A673 (cell line): ENCODE measurements at regions of chr12 and their contacts with region 1.

Region 1: GRCh38 chr12:53065975-53066931 is 12.9 kb downstream of the SPRYD3 start:
- DNase-seq: peak; percentile 79
- H3K4me3 ChIP-seq: no peak overlapping the region
- H3K27ac ChIP-seq: no peak overlapping the region
- H3K4me1 ChIP-seq: peaks cover 1% of the 10 kb centered on the region
- H3K27me3 ChIP-seq: no peaks in the 10 kb centered on the region
- CTCF ChIP-seq: peak; percentile 86

Region 2: DNA sequence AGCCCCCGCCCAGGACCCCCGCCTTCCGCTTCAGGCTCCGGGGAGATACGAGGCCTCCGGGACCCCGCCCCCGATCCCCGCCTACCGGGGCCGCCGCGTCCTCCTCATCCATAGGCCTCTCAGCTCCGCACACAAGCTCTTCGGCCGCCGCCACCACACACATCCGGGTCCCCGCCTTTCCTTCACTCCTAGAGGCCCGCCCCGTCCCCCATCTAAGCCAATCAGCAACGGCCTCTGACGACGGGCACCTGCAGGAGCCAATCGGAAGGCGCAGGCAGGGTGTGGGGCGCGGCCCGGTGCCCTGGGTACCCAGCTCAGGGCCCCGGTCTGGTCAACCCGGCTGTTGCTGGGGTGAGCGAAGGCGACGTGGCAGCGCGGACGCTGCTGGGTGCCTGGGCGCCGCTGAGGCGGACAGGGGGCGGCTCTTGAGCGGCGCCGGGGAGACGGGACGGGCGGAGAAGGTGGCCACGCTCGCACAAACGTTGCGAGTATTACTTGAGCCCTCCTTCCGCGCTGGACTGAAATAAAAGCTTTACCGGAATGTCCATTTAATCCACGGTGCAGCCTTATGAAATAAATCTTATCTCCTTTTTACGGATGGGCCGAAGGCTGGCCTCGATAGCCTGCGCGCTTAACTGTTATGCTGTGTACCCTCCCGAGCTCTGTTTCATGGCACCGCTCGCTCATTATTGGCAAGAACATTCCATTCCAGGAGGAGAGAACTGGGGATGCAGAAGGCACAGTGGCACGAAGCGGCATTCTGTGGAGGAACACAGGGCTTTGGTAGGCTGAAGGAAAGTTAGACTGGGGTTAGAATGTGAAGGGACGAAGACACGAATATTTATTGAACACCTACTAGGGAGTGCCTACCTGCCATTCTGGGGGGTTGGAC is 13.2 kb after region 1 on chr12 and contains the start of gene SPRYD3:
- CTCF ChIA-PET with region 1: interaction called, 18 read pairs
- POLR2A ChIA-PET with region 1: no interaction called
- intact Hi-C with region 1: no loop called
- DNase-seq: peak; percentile 97
- H3K4me3 ChIP-seq: peak within 1 kb of the TSS; percentile 65
- H3K27ac ChIP-seq: peak within 1 kb of the TSS; percentile 62
- H3K4me1 ChIP-seq: peaks cover 4% of the 10 kb centered on the region
- H3K27me3 ChIP-seq: no peaks in the 10 kb centered on the region
- CTCF ChIP-seq: no peak
- total RNA-seq, gene SPRYD3: 17.0 and 19.3 TPM in 2 replicates

Region 3: GRCh38 chr12:53098982-53099651 is 32.9 kb after region 1 on chr12:
- CTCF ChIA-PET with region 1: interaction called, 62 read pairs
- POLR2A ChIA-PET with region 1: interaction called, 3 read pairs
- intact Hi-C with region 1: loop called (anchors 1 kb)
- DNase-seq: peak; percentile 93
- H3K4me3 ChIP-seq: peak overlapping the region; percentile 61
- H3K27ac ChIP-seq: peak overlapping the region; percentile 6
- H3K4me1 ChIP-seq: peaks cover 23% of the 10 kb centered on the region
- H3K27me3 ChIP-seq: no peaks in the 10 kb centered on the region
- CTCF ChIP-seq: peak; percentile 93

Region 4: DNA sequence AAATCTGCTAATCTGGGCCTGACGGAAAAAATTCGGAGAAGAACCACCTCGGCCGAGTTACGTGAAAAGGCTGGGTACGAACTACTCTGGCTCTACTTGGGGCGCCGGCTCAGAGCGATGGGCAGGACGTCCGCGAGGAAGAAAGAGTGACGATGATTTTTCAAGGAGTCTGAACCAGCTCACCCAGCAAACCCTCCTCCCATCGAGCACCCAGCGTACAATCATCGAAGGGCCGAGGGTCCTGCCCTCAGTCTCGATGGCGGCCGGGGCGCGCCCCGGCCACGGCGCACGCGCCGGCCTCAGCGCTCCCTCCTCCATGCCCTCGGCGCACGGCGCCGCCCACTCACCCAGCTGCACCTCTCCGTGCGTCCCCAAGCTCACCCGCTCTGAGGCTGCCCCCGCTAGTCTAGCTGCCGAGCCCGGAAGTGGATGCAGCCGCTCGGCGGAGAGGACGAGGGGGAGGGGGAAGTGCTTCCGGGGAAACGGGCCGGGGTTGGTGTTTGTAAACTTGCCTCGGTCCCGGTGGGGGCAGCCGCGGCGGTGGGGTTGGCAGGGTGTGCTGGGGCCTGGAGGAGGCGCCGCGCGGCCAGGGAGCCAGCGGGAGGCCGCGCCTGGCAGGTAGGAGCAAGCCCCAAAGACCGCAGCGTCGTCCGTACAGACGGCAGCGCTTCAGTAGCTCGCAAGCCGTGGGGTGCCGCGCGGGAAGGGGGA is 114.1 kb after region 1 on chr12 and contains the starts of genes CSAD and ZNF740:
- CTCF ChIA-PET with region 1: interaction called, 3 read pairs
- POLR2A ChIA-PET with region 1: no interaction called
- intact Hi-C with region 1: loop called (anchors 5 kb)
- DNase-seq: peak; percentile 99
- H3K4me3 ChIP-seq: peak within 1 kb of the TSS; percentile 68
- H3K27ac ChIP-seq: peak within 1 kb of the TSS; percentile 93
- H3K4me1 ChIP-seq: peaks cover 29% of the 10 kb centered on the region
- H3K27me3 ChIP-seq: no peaks in the 10 kb centered on the region
- CTCF ChIP-seq: no peak
- total RNA-seq, gene CSAD: 32.3 and 37.5 TPM in 2 replicates
- total RNA-seq, gene ZNF740: 48.6 and 50.3 TPM in 2 replicates

Region 5: GRCh38 chr12:53190108-53190729 is 124.0 kb after region 1 on chr12:
- CTCF ChIA-PET with region 1: interaction called, 14 read pairs
- POLR2A ChIA-PET with region 1: no interaction called
- intact Hi-C with region 1: no loop called
- DNase-seq: peak; percentile 74
- H3K4me3 ChIP-seq: no peak overlapping the region
- H3K27ac ChIP-seq: no peak overlapping the region
- H3K4me1 ChIP-seq: no peaks in the 10 kb centered on the region
- H3K27me3 ChIP-seq: no peaks in the 10 kb centered on the region
- CTCF ChIP-seq: peak; percentile 76

Region 6: DNA sequence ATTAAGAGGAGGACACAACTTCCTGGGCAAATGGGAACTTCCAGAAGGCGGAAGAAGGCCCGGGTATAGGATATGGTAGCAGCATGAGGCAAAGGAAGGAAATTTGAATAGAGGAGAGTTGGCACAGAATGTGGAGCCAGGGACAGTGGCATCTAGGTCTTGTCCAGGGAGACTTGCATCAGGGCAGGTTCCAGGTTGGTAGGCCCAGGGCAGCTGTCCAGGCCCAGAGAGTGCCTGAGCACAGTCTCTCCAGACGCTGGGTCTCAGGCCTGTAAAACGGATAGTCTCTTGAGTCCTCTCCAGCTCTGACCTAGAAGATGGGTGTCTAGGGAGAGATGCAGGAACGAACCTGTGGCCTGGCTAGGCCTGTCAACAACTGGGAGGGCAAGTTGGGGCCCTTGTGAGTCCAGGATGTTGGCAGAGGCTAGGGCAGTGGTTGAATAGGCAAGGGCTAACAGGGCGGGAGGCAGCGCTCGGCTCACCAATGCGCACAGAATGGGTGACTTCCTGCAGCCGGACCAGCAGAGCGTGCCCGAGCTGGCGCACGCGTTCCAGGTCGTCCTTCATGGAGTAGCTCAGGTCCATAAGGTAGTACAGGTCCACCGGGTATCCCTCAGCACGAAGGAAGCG is 130.9 kb after region 1 on chr12:
- CTCF ChIA-PET with region 1: interaction called, 14 read pairs
- POLR2A ChIA-PET with region 1: no interaction called
- intact Hi-C with region 1: no loop called
- DNase-seq: no peak
- H3K4me3 ChIP-seq: no peak overlapping the region
- H3K27ac ChIP-seq: no peak overlapping the region
- H3K4me1 ChIP-seq: no peaks in the 10 kb centered on the region
- H3K27me3 ChIP-seq: no peaks in the 10 kb centered on the region
- CTCF ChIP-seq: no peak

Region 7: DNA sequence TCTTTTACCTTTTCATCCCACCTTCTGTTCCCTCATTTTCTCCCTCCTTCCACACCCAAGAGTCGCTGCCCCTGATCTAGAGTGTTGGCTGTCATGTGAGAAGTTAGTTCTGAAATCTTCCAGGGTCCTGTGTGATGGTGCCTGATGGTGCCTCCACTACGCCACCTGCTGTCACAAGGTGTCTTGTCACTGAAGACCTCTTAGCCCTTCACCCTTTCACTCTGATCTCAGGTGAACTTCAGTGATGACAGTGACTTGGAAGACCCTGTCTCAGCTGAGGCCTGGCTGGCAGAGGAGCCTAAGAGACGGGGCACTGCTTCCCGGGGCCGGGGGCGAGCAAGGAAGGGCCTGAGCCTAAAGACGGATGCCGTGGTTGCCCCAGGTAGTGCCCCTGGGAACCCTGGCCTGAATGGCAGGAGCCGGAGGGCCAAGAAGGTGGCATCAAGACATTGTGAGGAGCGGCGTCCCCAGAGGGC is 221.5 kb after region 1 on chr12:
- CTCF ChIA-PET with region 1: no interaction called
- POLR2A ChIA-PET with region 1: no interaction called
- intact Hi-C with region 1: loop called (anchors 2 kb)
- DNase-seq: peak; percentile 67
- H3K4me3 ChIP-seq: no peak overlapping the region
- H3K27ac ChIP-seq: no peak overlapping the region
- H3K4me1 ChIP-seq: no peaks in the 10 kb centered on the region
- H3K27me3 ChIP-seq: no peaks in the 10 kb centered on the region
- CTCF ChIP-seq: peak; percentile 72

Region 8: GRCh38 chr12:53344824-53345485 is 278.7 kb after region 1 on chr12:
- CTCF ChIA-PET with region 1: no interaction called
- POLR2A ChIA-PET with region 1: no interaction called
- intact Hi-C with region 1: no loop called
- DNase-seq: peak; percentile 72
- H3K4me3 ChIP-seq: peak overlapping the region; percentile 56
- H3K27ac ChIP-seq: peak overlapping the region; percentile 69
- H3K4me1 ChIP-seq: peaks cover 13% of the 10 kb centered on the region
- H3K27me3 ChIP-seq: no peaks in the 10 kb centered on the region
- CTCF ChIP-seq: peak; percentile 61